Activated naive CD4-positive, alpha-beta T cell treated with anti-CD3 and anti-CD28 coated beads for 36 hours (primary cell): ENCODE measurements at regions of chr1 and their contacts with region 1.

Region 1: GRCh38 chr1:163459539-163459938 is 137.8 kb downstream of the NUF2 start:
- DNase-seq: no peak
- H3K4me3 Mint-ChIP-seq: no peak overlapping the region
- H3K27ac Mint-ChIP-seq: no peak overlapping the region
- H3K4me1 Mint-ChIP-seq: no peaks in the 10 kb centered on the region
- H3K27me3 Mint-ChIP-seq: peaks cover 5% of the 10 kb centered on the region

Region 2: GRCh38 chr1:163307479-163308171 is 151.9 kb before region 1 on chr1:
- CTCF ChIA-PET with region 1: no interaction called
- intact Hi-C with region 1: no loop called
- DNase-seq: no peak
- H3K4me3 Mint-ChIP-seq: no peak overlapping the region
- H3K27ac Mint-ChIP-seq: no peak overlapping the region
- H3K4me1 Mint-ChIP-seq: peaks cover 3% of the 10 kb centered on the region
- H3K27me3 Mint-ChIP-seq: no peaks in the 10 kb centered on the region

Region 3: DNA sequence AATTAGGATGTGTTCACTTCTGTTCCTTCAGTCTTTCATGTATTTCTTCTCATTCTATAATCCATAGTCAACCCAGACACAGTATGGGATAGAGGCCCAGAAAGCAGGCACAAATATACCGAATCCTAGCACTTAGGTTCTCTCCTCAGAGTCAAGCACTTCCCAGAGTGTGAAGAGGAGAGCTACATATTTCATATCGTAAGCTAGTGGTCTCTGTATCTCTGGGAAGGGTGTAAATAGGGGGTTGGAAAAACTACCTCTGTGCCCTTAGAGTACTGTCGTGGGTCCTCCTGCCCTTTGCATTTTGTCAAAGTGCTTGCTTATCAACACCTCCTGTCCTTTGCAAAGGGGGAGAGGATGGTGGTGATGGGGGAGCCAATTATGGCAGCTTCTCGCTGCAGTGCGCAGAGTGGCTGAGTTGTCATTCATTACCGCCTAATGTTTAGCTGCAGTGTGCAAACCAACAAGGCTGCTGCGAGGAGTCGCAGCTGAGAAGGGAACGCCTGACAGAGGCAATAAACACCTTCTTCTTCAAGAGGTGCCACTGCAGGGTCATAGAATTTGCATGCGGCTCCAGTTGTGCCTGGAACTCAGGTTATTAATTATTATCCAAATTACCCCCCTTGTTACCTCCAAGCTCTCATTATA is 44.9 kb after region 1 on chr1:
- CTCF ChIA-PET with region 1: no interaction called
- intact Hi-C with region 1: loop called (anchors 5 kb)
- DNase-seq: no peak
- H3K4me3 Mint-ChIP-seq: no peak overlapping the region
- H3K27ac Mint-ChIP-seq: no peak overlapping the region
- H3K4me1 Mint-ChIP-seq: no peaks in the 10 kb centered on the region
- H3K27me3 Mint-ChIP-seq: peaks cover 5% of the 10 kb centered on the region